ENCODE measurements at regions of chr2 and their contacts with region 1.

Region 1: GRCh38 chr2:47386551-47386950 is 16.4 kb upstream of the MSH2 start:
- DNase-seq: no peak
- H3K4me3 ChIP-seq: no peak overlapping the region
- H3K4me3 Mint-ChIP-seq: no peak overlapping the region
- H3K27ac ChIP-seq: no peak overlapping the region
- H3K27ac Mint-ChIP-seq: no peak overlapping the region
- H3K4me1 ChIP-seq: no peaks in the 10 kb centered on the region
- H3K4me1 Mint-ChIP-seq: no peaks in the 10 kb centered on the region
- H3K27me3 ChIP-seq: no peaks in the 10 kb centered on the region
- H3K27me3 Mint-ChIP-seq: peaks cover 10% of the 10 kb centered on the region in 2 donors

Region 2: GRCh38 chr2:47336259-47337238 is 50.0 kb before region 1 on chr2:
- CTCF ChIA-PET with region 1: interaction called, 31 read pairs
- POLR2A ChIA-PET with region 1: no interaction called
- intact Hi-C with region 1: loop called (anchors 1 kb)
- DNase-seq: no peak
- H3K4me3 ChIP-seq: no peak overlapping the region
- H3K4me3 Mint-ChIP-seq: no peak overlapping the region
- H3K27ac ChIP-seq: no peak overlapping the region
- H3K27ac Mint-ChIP-seq: no peak overlapping the region
- H3K4me1 ChIP-seq: no peaks in the 10 kb centered on the region
- H3K4me1 Mint-ChIP-seq: peaks cover 0 to 5% (median 2%) of the 10 kb centered on the region in 4 donors
- H3K27me3 ChIP-seq: no peaks in the 10 kb centered on the region
- H3K27me3 Mint-ChIP-seq: peaks cover 0 to 5% of the 10 kb centered on the region in 2 donors

Region 3: GRCh38 chr2:47357483-47357882 is 29.1 kb before region 1 on chr2:
- CTCF ChIA-PET with region 1: no interaction called
- POLR2A ChIA-PET with region 1: no interaction called
- intact Hi-C with region 1: no loop called
- DNase-seq: no peak
- H3K4me3 ChIP-seq: no peak overlapping the region
- H3K4me3 Mint-ChIP-seq: no peak overlapping the region
- H3K27ac ChIP-seq: no peak overlapping the region
- H3K27ac Mint-ChIP-seq: no peak overlapping the region
- H3K4me1 ChIP-seq: no peaks in the 10 kb centered on the region
- H3K4me1 Mint-ChIP-seq: no peaks in the 10 kb centered on the region
- H3K27me3 ChIP-seq: no peaks in the 10 kb centered on the region
- H3K27me3 Mint-ChIP-seq: peaks cover 0 to 3% of the 10 kb centered on the region in 2 donors

Region 4: GRCh38 chr2:47414682-47415458 is 28.3 kb after region 1 on chr2:
- CTCF ChIA-PET with region 1: interaction called, 10 read pairs
- POLR2A ChIA-PET with region 1: no interaction called
- intact Hi-C with region 1: no loop called
- DNase-seq: no peak
- H3K4me3 ChIP-seq: no peak overlapping the region
- H3K4me3 Mint-ChIP-seq: no peak overlapping the region
- H3K27ac ChIP-seq: no peak overlapping the region
- H3K27ac Mint-ChIP-seq: no peak overlapping the region
- H3K4me1 ChIP-seq: no peaks in the 10 kb centered on the region
- H3K4me1 Mint-ChIP-seq: peaks cover 0 to 3% (median 0%) of the 10 kb centered on the region in 4 donors
- H3K27me3 ChIP-seq: no peaks in the 10 kb centered on the region
- H3K27me3 Mint-ChIP-seq: no peaks in the 10 kb centered on the region

Region 5: DNA sequence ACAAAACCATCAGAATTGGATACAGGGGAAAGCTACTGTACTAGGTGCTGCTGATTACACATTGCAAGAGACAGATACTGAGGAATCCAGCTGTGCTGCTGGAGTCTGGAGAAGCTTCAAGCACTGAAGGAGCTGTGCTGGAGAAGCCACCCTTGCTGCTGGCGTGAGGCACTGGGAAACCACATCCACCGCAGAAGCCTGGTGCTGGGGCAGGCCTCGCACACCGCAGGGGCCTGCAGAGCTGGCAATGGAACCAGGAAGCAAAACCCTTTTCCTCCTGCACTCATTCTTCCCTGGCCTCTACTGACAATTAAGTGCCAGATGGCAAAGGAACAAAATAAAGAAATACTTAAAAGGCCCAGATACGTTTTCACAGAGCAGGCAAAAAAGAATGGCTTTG is 302.0 kb after region 1 on chr2:
- CTCF ChIA-PET with region 1: no interaction called
- POLR2A ChIA-PET with region 1: no interaction called
- intact Hi-C with region 1: no loop called
- DNase-seq: no peak
- H3K4me3 ChIP-seq: no peak overlapping the region
- H3K4me3 Mint-ChIP-seq: peak overlapping the region in 1 of 8 donors; percentile 10
- H3K27ac ChIP-seq: no peak overlapping the region
- H3K27ac Mint-ChIP-seq: no peak overlapping the region
- H3K4me1 ChIP-seq: no peaks in the 10 kb centered on the region
- H3K4me1 Mint-ChIP-seq: peaks cover 0 to 6% (median 0%) of the 10 kb centered on the region in 4 donors
- H3K27me3 ChIP-seq: no peaks in the 10 kb centered on the region
- H3K27me3 Mint-ChIP-seq: no peaks in the 10 kb centered on the region

Measured in CD4-positive, alpha-beta memory T cell (primary cell).